ENCODE measurements at regions of chr1 and their contacts with region 1.

Region 1: DNA sequence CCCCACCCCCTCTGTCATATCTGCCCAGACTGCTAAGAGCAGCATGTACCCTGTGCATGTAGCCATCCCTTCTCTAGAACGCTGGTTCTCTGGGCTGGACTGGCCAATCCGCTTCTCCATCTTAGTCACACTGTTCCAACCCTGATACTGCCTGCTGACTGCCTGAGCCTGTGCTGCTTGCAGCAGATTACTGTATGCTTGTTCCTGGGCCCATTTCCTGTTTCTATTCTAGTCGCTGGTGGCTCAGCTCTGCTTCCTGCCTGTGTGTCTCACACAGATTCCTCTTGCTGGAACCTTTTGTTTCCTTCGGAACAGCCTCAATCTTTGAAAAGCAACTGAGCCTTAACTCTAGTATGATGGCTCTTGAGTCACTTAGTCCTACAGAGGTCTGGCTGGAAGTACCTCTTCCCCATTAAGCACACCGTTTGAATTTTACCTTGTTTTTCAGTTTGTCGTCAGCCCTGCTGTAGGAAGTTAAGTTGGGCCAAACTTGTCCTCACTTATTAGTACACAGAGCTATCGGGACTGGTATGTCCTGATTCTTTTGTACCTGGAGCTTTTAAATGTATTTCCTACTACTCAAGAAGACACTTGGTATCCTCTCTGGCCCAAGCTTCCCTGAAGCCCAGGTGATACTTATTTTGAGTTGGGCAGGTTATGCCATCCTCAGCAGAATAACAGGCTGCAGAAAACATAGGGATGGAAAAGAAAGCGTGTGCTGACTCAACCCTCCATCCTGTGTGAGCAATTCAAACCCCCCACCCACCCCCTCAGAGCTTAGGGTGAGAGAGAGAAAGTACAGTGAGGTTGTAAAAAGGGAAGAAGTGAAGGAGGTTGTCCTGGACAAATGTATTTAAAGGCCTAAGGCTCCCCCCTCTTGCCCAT is 43.4 kb upstream of the PIGV start:
- DNase-seq: peak; percentile 90
- ATAC-seq: peak; percentile 93
- H3K4me3 Mint-ChIP-seq: peak overlapping the region; percentile 67
- H3K27ac Mint-ChIP-seq: peak overlapping the region; percentile 97
- H3K4me1 Mint-ChIP-seq: peaks cover 93% of the 10 kb centered on the region
- H3K27me3 Mint-ChIP-seq: no peaks in the 10 kb centered on the region

Region 2: DNA sequence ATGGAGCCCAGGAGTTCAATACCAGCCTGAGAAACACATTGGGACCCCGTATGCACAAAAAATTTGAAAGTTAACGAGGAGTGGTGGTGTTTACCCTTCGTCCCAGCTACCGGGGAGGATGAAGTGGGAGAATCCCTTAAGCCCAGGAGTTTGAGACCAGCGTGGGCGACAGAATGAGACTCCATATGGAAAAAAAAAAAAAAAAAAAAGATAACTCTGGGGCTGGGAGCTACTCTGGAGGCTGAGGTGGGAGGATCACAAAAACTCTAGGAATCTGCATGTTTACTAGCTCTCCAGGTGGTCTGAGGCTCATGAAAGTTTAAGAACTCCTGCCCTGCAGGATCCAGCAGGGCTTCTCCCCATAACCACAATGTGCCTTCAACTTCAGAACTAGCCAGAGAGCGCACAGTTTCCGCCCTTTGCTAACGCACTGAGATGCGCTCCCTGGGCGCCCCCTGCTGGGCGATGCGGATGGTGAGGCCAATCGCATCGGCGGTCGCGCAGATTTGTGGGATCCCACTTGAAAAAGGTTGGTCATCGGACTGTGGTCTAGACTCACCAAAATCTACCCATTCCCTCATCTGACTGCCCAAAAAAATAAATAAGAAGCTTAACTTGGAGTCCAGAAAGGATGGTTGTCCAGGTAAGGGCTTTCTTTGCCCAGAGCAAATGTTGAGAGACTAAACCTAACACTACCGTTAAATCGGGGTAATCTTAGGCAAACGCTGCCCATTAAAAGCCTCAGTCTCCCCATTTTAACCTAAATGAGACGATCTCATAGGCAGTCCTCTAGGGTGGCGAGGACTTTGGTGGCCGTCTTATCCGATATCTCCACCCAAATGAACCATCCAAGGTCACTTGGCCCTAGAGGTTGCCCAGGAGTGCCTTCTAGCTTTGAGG is 380.5 kb before region 1 on chr1:
- CTCF ChIA-PET with region 1: no interaction called
- POLR2A ChIA-PET with region 1: no interaction called
- intact Hi-C with region 1: no loop called
- DNase-seq: peak; percentile 92
- ATAC-seq: peak; percentile 77
- H3K4me3 Mint-ChIP-seq: no peak overlapping the region
- H3K27ac Mint-ChIP-seq: no peak overlapping the region
- H3K4me1 Mint-ChIP-seq: peaks cover 28% of the 10 kb centered on the region
- H3K27me3 Mint-ChIP-seq: peaks cover 11% of the 10 kb centered on the region

Region 3: DNA sequence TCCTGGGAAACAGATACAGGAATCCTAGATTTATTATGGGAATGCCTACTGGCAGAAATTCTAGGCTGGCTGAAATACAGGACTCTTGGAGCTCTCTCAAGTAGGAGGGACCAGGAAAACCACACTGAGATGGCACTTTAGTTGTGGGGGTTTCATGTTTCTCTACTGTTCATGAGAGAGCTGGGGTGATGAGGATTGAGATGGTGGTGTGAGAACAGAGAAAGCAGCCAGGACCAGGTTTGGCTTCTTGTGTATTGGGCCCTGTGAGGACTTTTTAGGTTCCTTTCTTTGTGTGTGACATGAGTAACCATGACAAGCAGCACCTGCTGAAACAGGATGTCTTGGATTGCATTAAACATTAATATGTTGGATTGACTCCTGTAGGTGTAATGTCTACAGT is 43.6 kb before region 1 on chr1:
- CTCF ChIA-PET with region 1: interaction called, 12 read pairs
- POLR2A ChIA-PET with region 1: interaction called, 26 read pairs
- intact Hi-C with region 1: loop called (anchors 1 kb)
- DNase-seq: no peak
- ATAC-seq: no peak
- H3K4me3 Mint-ChIP-seq: no peak overlapping the region
- H3K27ac Mint-ChIP-seq: no peak overlapping the region
- H3K4me1 Mint-ChIP-seq: peaks cover 10% of the 10 kb centered on the region
- H3K27me3 Mint-ChIP-seq: no peaks in the 10 kb centered on the region

Region 4: DNA sequence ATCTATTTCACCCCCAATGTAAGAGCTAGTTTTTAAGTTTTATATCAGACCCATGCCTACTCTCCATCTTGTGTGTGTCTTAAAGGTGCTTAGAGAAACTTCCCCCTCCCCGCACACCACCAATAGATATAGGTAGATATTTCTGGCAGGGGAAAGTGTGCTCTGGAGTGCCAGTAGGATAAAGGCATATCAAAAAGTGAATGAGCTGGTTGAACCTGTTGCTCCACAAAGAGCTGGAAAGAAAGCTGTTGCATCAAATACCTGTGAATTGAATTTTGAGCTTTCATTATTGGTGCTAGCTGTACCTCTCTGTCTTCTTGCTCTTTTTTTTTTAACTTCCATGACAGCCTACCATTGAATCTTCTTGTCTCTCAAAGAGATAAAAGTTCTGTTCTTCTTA is 15.7 kb before region 1 on chr1:
- CTCF ChIA-PET with region 1: interaction called, 8 read pairs
- POLR2A ChIA-PET with region 1: interaction called, 4 read pairs
- intact Hi-C with region 1: loop called in 1 of 2 experiments (anchors 1 kb)
- DNase-seq: no peak
- ATAC-seq: no peak
- H3K4me3 Mint-ChIP-seq: no peak overlapping the region
- H3K27ac Mint-ChIP-seq: peak overlapping the region; percentile 13
- H3K4me1 Mint-ChIP-seq: peaks cover 93% of the 10 kb centered on the region
- H3K27me3 Mint-ChIP-seq: no peaks in the 10 kb centered on the region

Measured in activated CD4-positive, alpha-beta T cell treated with anti-CD3 and anti-CD28 coated beads for 36 hours (primary cell).